Psoas muscle (tissue), 8 donors: ENCODE measurements at regions of chr11 and their contacts with region 1.

Region 1: GRCh38 chr11:117217141-117218084 is 14.5 kb downstream of the PCSK7 start:
- DNase-seq: no peak
- ATAC-seq: no peak
- H3K4me3 ChIP-seq: peak overlapping the region; percentile 13
- H3K27ac ChIP-seq: peak overlapping the region; percentile 62
- H3K4me1 ChIP-seq: peaks cover 42% of the 10 kb centered on the region
- H3K27me3 ChIP-seq: no peaks in the 10 kb centered on the region
- CTCF ChIP-seq: no peak

Region 2: GRCh38 chr11:117010808-117011540 is 206.4 kb before region 1 on chr11:
- intact Hi-C with region 1: no loop called
- DNase-seq: no peak
- ATAC-seq: peak in 2 of 4 donors; percentile 37 to 54
- H3K4me3 ChIP-seq: no peak overlapping the region
- H3K27ac ChIP-seq: no peak overlapping the region
- H3K4me1 ChIP-seq: peaks cover 10% of the 10 kb centered on the region
- H3K27me3 ChIP-seq: no peaks in the 10 kb centered on the region
- CTCF ChIP-seq: no peak

Region 3: GRCh38 chr11:117180661-117181585 is 36.5 kb before region 1 on chr11:
- intact Hi-C with region 1: loop called (anchors 2 to 5 kb)
- DNase-seq: peak; percentile 71 to 86
- ATAC-seq: peak; percentile 47 to 67 (median 56)
- H3K4me3 ChIP-seq: peak overlapping the region; percentile 90
- H3K27ac ChIP-seq: no peak overlapping the region
- H3K4me1 ChIP-seq: peaks cover 32% of the 10 kb centered on the region
- H3K27me3 ChIP-seq: no peaks in the 10 kb centered on the region
- CTCF ChIP-seq: peak; percentile 63